Left colon (tissue), 2 donors: ENCODE measurements at regions of chr15 and their contacts with region 1.

Region 1: GRCh38 chr15:98779463-98780071 is 131.2 kb downstream of the IGF1R start:
- DNase-seq: peak; percentile 77 to 90
- ATAC-seq: peak; percentile 96

Region 2: GRCh38 chr15:98658831-98659699 is 120.5 kb before region 1 on chr15:
- intact Hi-C with region 1: loop called in 1 of 2 experiments (anchors 10 kb)
- DNase-seq: peak in 1 of 2 donors; percentile 15
- ATAC-seq: peak; percentile 84